Activated naive CD4-positive, alpha-beta T cell treated with anti-CD3 and anti-CD28 coated beads for 36 hours (primary cell): ENCODE measurements at regions of chr3 and their contacts with region 1.

Region 1: DNA sequence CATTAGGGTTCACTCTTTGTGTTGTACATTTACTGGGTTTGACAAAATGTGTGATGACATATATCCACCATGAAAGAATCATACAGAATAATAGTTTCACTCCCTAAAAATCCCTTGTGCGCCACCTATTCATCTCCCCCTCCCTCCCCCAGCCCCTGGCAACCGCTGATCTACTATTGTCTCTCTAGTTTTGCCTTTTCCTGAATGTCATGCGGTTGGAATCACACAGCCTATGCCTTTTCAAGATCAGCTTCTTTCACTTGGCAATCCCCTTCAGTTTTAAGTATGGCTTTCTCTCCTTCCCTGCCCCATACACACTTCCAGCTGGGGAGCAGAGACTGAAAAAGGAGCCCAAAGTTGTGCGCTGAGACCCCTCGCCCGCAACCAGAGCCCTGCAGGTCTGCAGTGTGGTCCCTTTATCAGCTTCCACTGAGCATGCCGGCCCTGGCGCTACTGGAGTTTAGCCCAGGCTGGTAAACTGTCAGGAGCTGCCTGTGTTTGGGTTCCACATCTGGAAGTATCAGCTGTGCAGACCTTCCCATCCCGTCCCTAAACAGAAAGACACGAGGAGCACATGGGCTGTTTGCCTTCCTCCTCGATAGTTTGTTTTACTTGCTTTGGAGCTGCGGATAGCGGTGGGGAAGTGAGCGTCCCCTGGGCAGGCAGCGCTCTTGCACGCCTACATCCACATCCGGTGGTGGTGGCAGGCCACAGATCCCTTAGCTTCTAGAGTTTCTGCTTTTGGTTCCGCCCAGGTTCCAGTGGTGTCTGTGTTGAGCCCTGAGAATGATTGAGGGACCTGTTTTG is 12.3 kb downstream of the BOC start:
- DNase-seq: peak; percentile 36
- H3K4me3 Mint-ChIP-seq: peak overlapping the region; percentile 6
- H3K27ac Mint-ChIP-seq: no peak overlapping the region
- H3K4me1 Mint-ChIP-seq: peaks cover 11% of the 10 kb centered on the region
- H3K27me3 Mint-ChIP-seq: peaks cover 27% of the 10 kb centered on the region

Region 2: DNA sequence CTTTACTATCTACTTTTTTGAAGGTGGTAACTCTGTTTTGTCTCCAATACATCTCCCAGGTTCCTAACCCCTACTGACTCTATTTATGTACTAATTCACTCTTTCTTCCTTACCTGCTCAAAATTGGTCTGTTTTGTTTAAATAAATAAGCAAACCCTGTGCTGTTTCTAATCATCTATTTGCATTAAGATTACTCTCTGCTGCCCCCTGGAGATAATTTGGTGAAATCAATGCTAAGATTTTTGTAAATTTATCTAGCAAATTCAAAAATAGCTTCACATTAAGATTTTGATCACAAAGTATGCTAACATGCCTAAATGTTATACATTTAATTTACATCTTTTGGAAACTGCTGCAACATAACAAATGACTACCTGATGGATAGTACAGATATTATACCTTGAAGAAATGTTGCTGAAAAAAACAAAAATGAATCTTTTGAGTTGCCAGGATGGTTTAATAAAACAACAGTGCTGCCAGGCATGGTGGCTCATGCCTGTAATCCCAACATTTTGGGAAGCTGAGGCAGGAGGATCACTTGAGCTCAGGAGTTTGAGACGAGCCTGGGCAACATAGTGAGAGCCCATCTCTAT is 244.3 kb before region 1 on chr3:
- CTCF ChIA-PET with region 1: no interaction called
- intact Hi-C with region 1: no loop called
- DNase-seq: no peak
- H3K4me3 Mint-ChIP-seq: no peak overlapping the region
- H3K27ac Mint-ChIP-seq: no peak overlapping the region
- H3K4me1 Mint-ChIP-seq: peaks cover 64% of the 10 kb centered on the region
- H3K27me3 Mint-ChIP-seq: no peaks in the 10 kb centered on the region

Region 3: DNA sequence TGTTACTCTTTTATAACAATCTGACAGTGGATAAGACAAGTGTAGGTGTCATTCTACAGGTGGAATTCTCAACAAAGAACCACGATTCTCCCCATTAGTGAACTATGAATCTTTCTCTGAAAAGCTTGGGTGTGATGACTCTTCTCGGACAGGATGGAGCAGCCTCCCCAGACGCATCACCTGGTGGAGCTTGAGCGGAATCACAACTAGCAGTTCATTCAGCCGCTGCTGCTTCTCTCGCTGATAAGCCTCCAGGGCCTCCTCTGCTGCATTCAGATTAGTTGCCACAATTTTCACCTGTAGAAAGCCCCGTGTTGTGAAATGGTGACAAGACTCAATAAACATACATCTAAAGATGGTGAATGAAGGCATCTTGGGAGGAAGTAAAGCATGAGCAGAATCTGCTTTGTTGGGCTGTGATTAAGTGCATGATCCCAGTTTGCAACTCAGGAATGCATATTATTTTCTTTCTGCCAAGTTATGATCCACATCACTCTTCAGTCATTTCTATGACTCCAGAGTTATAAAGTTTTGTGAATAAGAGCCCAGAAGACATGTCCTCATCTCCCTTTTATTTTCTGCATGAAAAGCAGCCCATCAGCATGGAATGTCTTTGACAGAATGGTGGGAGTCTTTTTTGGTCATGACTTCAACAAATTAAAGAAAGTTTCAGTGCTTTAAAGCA is 81.3 kb after region 1 on chr3:
- CTCF ChIA-PET with region 1: no interaction called
- intact Hi-C with region 1: loop called (anchors 2 kb)
- DNase-seq: no peak
- H3K4me3 Mint-ChIP-seq: no peak overlapping the region
- H3K27ac Mint-ChIP-seq: no peak overlapping the region
- H3K4me1 Mint-ChIP-seq: no peaks in the 10 kb centered on the region
- H3K27me3 Mint-ChIP-seq: no peaks in the 10 kb centered on the region